ENCODE measurements at regions of chr1 and their contacts with region 1.

Region 1: GRCh38 chr1:166479052-166479631 is 312.3 kb upstream of the FAM78B start:
- DNase-seq: peak; percentile 30 to 72
- ATAC-seq: peak in 2 of 3 donors; percentile 53 to 65
- H3K4me3 ChIP-seq: no peak overlapping the region
- H3K4me3 Mint-ChIP-seq: no peak overlapping the region
- H3K27ac ChIP-seq: no peak overlapping the region
- H3K27ac Mint-ChIP-seq: no peak overlapping the region
- H3K4me1 ChIP-seq: no peaks in the 10 kb centered on the region
- H3K4me1 Mint-ChIP-seq: no peaks in the 10 kb centered on the region
- H3K27me3 ChIP-seq: no peaks in the 10 kb centered on the region
- H3K27me3 Mint-ChIP-seq: no peaks in the 10 kb centered on the region
- CTCF ChIP-seq: peak; percentile 91

Region 2: GRCh38 chr1:165717918-165718515 is 761.1 kb before region 1 on chr1:
- intact Hi-C with region 1: loop called (anchors 5 kb)
- DNase-seq: peak in 1 of 2 donors; percentile 60
- ATAC-seq: peak in 1 of 3 donors; percentile 45
- H3K4me3 ChIP-seq: no peak overlapping the region
- H3K4me3 Mint-ChIP-seq: no peak overlapping the region
- H3K27ac ChIP-seq: no peak overlapping the region
- H3K27ac Mint-ChIP-seq: no peak overlapping the region
- H3K4me1 ChIP-seq: no peaks in the 10 kb centered on the region
- H3K4me1 Mint-ChIP-seq: no peaks in the 10 kb centered on the region
- H3K27me3 ChIP-seq: no peaks in the 10 kb centered on the region
- H3K27me3 Mint-ChIP-seq: no peaks in the 10 kb centered on the region
- CTCF ChIP-seq: peak; percentile 49

Region 3: DNA sequence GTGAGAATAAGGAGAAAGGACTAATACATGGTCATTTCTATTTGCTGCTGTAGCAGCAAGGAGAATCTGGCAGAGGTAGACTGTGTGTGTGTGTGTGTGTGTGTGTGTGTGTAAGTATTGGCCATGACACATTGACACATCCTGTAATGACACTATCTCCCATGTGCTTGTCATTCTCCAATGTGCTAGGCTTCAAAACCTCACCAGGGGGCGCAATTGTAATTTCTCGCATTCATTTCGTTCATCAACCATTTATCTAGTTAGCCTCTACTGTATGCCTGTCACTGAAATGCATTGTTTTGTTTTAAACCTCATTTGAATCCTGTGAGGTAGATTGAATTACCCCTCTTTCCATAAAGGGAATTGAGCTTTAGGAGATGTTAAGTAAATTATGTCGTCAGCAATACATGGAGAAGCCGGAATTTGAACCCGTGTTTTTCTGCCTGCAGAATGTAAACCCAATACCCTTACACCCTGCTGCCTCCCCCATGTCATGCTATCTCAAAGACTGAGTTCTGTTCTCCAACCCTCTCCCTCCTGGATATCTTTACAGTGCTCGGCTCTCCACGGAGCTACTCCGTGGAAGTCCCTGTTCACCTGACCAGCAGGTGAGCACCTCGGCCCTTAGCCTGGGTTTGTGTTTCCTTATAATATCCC is 550.9 kb before region 1 on chr1:
- intact Hi-C with region 1: loop called (anchors 10 kb)
- DNase-seq: peak in 1 of 2 donors; percentile 72
- ATAC-seq: peak; percentile 70 to 75 (median 75)
- H3K4me3 ChIP-seq: no peak overlapping the region
- H3K4me3 Mint-ChIP-seq: no peak overlapping the region
- H3K27ac ChIP-seq: no peak overlapping the region
- H3K27ac Mint-ChIP-seq: no peak overlapping the region
- H3K4me1 ChIP-seq: no peaks in the 10 kb centered on the region
- H3K4me1 Mint-ChIP-seq: no peaks in the 10 kb centered on the region
- H3K27me3 ChIP-seq: no peaks in the 10 kb centered on the region
- H3K27me3 Mint-ChIP-seq: peaks cover 8 to 20% of the 10 kb centered on the region in 2 donors
- CTCF ChIP-seq: peak; percentile 57

Region 4: DNA sequence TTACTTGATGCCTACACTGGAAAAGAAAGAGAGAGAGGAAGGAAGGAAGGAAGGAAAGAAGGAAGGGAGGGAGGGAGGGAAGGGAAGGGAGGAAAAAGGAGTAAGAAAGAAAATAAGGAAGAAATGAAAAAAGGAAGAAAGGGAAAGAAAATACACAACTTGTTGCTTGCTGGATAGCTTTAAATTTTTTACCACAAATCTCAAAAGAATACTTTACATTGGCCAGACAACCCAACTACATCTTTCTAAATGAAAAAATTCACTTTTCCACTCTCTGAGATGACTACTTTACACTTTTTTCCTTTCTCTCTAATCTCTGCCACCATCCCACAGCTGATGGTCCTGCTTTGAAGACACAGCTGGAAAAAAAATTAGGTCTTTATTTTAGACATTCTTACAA is 83.4 kb before region 1 on chr1:
- intact Hi-C with region 1: no loop called
- DNase-seq: no peak
- ATAC-seq: no peak
- H3K4me3 ChIP-seq: no peak overlapping the region
- H3K4me3 Mint-ChIP-seq: no peak overlapping the region
- H3K27ac ChIP-seq: no peak overlapping the region
- H3K27ac Mint-ChIP-seq: no peak overlapping the region
- H3K4me1 ChIP-seq: no peaks in the 10 kb centered on the region
- H3K4me1 Mint-ChIP-seq: no peaks in the 10 kb centered on the region
- H3K27me3 ChIP-seq: no peaks in the 10 kb centered on the region
- H3K27me3 Mint-ChIP-seq: peaks cover 0 to 2% of the 10 kb centered on the region in 2 donors
- CTCF ChIP-seq: no peak

Region 5: DNA sequence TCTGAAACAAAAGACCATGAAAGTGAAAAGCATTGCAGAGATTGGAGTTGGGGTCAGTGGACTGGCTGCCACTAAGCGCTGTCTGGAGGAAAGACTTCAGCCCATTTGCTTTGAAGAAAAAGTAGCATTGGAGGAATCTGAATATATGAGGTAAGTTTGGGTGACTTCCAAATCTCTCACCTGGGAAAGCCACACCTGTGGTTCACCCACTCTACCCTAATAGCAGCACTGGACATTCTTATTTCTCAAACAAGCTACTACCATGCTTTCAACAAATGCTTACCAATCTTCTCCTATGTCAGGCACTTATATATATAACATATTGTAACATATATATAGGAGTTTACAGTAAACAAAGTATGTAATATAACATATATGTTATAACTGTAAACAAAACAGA is 284.2 kb after region 1 on chr1:
- intact Hi-C with region 1: no loop called
- DNase-seq: no peak
- ATAC-seq: no peak
- H3K4me3 ChIP-seq: no peak overlapping the region
- H3K4me3 Mint-ChIP-seq: no peak overlapping the region
- H3K27ac ChIP-seq: no peak overlapping the region
- H3K27ac Mint-ChIP-seq: no peak overlapping the region
- H3K4me1 ChIP-seq: no peaks in the 10 kb centered on the region
- H3K4me1 Mint-ChIP-seq: no peaks in the 10 kb centered on the region
- H3K27me3 ChIP-seq: peaks cover 2% of the 10 kb centered on the region
- H3K27me3 Mint-ChIP-seq: peaks cover 0 to 2% of the 10 kb centered on the region in 2 donors
- CTCF ChIP-seq: no peak

Measured in natural killer cell (primary cell).